ENCODE measurements at regions of chr14 and their contacts with region 1.

Region 1: GRCh38 chr14:61568572-61569131 is 126.7 kb upstream of the HIF1A start:
- DNase-seq: peak; percentile 98
- H3K4me3 ChIP-seq: peak overlapping the region; percentile 53
- H3K27ac ChIP-seq: peak overlapping the region; percentile 93
- H3K4me1 ChIP-seq: peaks cover 77% of the 10 kb centered on the region
- CTCF ChIP-seq: peak; percentile 65

Region 2: DNA sequence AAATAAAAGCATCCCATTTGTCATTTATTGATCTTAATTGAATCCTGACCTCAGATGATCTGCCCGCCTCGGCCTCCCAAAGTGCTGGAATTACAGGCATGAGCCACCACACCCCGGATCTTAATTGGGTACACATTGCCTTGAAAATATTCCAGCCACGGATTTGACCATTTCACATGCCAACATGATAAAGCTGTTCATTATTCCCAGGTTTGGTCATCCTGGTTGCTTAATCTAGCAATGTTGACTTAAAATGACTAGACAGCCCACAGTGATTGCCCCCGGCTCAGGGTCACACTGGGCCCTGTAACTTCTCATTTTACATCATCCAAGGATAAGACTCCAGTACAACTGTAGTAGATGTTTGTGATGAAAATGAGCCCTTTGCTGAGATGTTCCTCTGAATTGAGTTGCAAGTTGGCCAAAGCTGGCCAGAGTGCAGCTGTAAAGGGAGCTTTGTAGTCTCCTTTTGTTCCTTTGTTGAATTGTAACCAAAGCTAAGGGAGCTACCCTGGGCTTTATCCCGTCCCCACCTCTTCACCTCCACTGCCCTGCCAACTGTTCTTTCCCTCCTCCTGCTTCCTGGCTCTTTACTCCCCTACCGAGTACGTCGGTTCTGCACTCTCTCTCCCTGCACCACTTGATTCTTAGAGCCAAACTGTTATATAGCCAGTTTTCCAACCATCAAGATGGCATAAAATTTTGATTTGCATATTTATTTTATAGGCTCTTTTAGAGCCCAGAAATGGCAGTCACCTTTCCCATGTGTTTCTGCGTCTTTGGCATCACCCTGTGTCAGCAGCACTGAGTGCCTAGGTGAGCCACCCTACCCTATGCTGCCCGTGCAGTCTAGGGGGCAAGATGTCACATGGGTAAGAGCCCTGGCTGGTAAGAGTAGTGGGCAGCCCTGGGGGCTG is 14.7 kb before region 1 on chr14:
- CTCF ChIA-PET with region 1: interaction called, 3 read pairs
- POLR2A ChIA-PET with region 1: interaction called, 64 read pairs
- intact Hi-C with region 1: loop called (anchors 1 kb)
- DNase-seq: no peak
- H3K4me3 ChIP-seq: peak overlapping the region; percentile 6
- H3K27ac ChIP-seq: peak overlapping the region; percentile 83
- H3K4me1 ChIP-seq: peaks cover 54% of the 10 kb centered on the region
- CTCF ChIP-seq: no peak

Region 3: GRCh38 chr14:61644834-61645233 is 76.2 kb after region 1 on chr14:
- CTCF ChIA-PET with region 1: no interaction called
- POLR2A ChIA-PET with region 1: no interaction called
- intact Hi-C with region 1: loop called (anchors 2 kb)
- DNase-seq: peak; percentile 90
- H3K4me3 ChIP-seq: peak overlapping the region; percentile 51
- H3K27ac ChIP-seq: peak overlapping the region; percentile 95
- H3K4me1 ChIP-seq: peaks cover 61% of the 10 kb centered on the region
- CTCF ChIP-seq: no peak

Region 4: DNA sequence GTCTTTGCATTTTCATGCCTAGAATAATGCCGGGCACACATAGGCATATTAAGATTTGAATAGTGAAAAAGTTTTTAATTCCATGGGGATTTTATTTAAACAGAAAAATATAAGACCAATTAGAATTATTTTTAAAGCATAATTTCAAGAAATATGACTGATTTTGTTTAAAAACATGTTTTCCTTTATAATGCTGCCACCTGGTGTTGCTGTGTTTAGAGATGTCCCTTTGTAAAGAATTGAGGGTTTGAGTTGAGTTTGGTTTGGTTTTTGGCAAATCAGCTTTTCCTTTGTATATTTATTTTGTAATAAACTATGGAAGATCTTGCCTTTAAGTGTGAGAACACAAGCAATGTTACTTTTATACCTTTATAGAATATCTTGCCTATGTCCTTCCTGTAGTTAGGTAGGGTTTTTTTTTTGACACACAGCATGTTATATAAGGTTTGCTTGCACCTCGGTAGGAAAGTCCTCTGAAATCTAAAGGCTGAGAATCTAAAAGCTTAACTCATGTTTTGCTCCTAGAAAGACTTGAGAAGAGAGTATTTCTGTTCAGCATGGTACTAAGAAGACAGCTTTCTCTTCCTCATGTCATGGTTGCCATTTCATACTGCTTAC is 162.2 kb after region 1 on chr14:
- CTCF ChIA-PET with region 1: interaction called, 4 read pairs
- POLR2A ChIA-PET with region 1: interaction called, 3 read pairs
- intact Hi-C with region 1: loop called (anchors 5 kb)
- DNase-seq: peak; percentile 46
- H3K4me3 ChIP-seq: no peak overlapping the region
- H3K27ac ChIP-seq: peak overlapping the region; percentile 21
- H3K4me1 ChIP-seq: peaks cover 22% of the 10 kb centered on the region
- CTCF ChIP-seq: peak; percentile 93

Measured in OCI-LY7 (cell line).